HEK293 (cell line): ENCODE measurements at regions of chr2 and their contacts with region 1.

Region 1: GRCh38 chr2:11234309-11234708 is 79.0 kb downstream of the SLC66A3 start:
- H3K4me3 ChIP-seq: no peak overlapping the region
- H3K27ac ChIP-seq: no peak overlapping the region
- H3K4me1 ChIP-seq: no peaks in the 10 kb centered on the region
- CTCF ChIP-seq: peak; percentile 40; the same call in 1 of the 2 replicates

Region 2: DNA sequence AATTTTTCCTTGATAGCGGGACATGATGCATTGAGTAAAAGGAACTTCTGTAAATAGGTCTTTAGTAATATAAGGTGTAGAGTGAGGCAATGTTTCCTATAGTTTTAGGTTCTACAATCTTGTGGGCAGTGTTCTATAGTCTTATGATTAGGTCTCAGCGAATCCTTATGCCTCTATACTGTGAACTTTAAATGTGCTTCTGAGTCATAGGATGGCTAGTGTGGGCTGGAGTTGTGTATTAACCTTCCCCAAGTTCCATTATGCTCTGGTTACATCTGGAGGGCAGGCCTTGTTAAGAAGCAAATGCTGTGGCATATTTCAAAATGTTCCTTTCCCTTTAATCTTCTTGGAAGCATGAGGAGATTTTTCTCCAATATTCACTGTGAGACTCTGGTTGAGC is 36.6 kb after region 1 on chr2:
- CTCF ChIA-PET with region 1: no interaction called
- POLR2A ChIA-PET with region 1: no interaction called
- H3K4me3 ChIP-seq: no peak overlapping the region
- H3K27ac ChIP-seq: no peak overlapping the region
- H3K4me1 ChIP-seq: 0 out of 2 replicates have a peak, but pooled peaks cover 3% of the 10 kb centered on the region
- CTCF ChIP-seq: no peak

Region 3: DNA sequence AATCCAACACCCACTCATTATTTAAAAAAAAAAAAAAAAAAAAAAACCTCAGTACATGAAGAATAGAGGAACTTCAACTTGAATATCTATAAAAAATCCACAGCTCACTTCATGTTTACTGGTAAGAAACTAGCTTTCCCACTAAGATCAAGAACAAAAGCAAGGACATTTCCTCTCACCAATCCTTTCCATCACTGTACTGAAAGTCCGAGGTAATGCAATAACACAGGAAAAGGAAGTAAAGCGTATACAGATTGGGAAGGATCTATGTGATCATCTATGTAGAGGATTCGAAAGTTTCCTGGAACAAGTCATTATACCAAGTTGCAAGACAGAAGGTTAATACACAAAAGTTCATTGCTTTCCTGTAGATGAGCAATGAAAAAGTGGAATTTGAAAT is 46.9 kb after region 1 on chr2:
- CTCF ChIA-PET with region 1: no interaction called
- POLR2A ChIA-PET with region 1: no interaction called
- H3K4me3 ChIP-seq: no peak overlapping the region
- H3K27ac ChIP-seq: no peak overlapping the region
- H3K4me1 ChIP-seq: no peaks in the 10 kb centered on the region
- CTCF ChIP-seq: no peak

Region 4: GRCh38 chr2:11370377-11371091 is 136.2 kb after region 1 on chr2:
- CTCF ChIA-PET with region 1: no interaction called
- POLR2A ChIA-PET with region 1: no interaction called
- H3K4me3 ChIP-seq: no peak overlapping the region
- H3K27ac ChIP-seq: no peak overlapping the region
- H3K4me1 ChIP-seq: peaks cover 9% of the 10 kb centered on the region
- CTCF ChIP-seq: no peak

Region 5: DNA sequence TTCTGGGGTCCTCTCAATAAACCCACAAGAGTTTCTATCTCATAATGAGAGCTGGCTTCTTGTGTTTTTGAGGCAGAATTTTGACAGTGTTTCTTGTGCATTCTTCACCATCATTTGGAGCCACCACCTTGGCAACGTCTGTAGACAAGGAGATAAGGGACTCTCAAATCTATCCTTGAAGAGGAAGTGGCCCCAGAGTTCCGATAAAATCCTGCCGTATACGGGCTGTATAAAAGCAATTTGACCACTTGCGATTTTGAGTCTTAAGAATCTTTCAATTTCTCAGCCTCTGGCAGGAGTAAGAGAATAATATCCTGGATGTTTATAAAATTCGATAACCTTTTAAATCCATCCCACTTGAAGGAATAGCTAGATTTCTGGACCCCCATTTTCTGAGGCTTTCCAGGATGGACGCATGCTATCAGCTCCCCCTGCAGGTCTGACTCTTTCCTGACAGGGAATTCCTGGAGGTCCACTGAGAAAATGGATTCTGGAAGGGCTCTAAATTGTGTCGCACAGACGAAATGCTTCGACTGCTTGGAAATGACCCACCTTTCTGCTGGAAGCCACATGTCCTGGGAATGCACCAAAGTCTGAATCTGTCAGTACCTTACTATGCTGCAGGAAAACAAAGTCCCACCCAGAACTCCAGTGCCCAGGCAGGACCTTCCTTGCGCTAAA is 177.6 kb after region 1 on chr2:
- CTCF ChIA-PET with region 1: interaction called, 28 read pairs
- POLR2A ChIA-PET with region 1: no interaction called
- H3K4me3 ChIP-seq: no peak overlapping the region
- H3K27ac ChIP-seq: no peak overlapping the region
- H3K4me1 ChIP-seq: no peaks in the 10 kb centered on the region
- CTCF ChIP-seq: peak; percentile 31; the same call in 1 of the 2 replicates